ENCODE measurements at regions of chr13 and their contacts with region 1.

Region 1: GRCh38 chr13:20924758-20925394 is 22.3 kb upstream of the XPO4 start:
- DNase-seq: peak; percentile 73 to 85 (median 77)
- H3K4me3 ChIP-seq: no peak overlapping the region
- H3K27ac ChIP-seq: no peak overlapping the region
- H3K4me1 ChIP-seq: no peaks in the 10 kb centered on the region
- H3K27me3 ChIP-seq: no peaks in the 10 kb centered on the region
- CTCF ChIP-seq: peak in 2 of 3 donors; percentile 42 to 51
- EP300 ChIP-seq: no peak
- POLR2A ChIP-seq: no peak

Region 2: DNA sequence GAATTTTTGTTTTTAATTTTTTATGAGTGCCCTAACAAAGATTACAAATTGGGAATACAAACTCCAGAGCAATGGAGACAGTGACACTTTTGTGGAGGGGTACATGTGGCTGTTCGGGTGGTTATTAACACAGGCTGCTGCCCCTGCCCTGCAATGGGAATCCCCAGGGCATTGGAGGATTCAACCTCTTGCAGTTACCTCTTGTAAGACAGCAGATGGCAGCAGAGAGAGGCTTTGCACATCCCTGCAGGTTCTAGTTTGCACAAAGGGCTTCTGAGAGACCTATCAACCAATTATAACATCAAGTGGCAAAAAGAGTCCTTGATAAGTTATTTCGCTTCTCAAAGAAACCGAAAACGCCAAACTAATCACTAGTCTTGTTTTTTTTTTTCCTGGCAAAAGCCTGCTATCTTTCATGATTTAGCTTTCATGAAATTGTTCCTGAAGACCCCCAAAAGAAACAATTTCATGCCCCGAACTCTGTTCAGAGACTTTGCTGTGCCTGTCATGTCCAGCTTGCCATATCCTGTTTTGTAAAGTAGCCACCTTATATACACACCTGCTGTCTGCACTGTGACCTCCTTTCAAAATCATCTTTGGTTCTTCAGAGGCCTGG is 742.5 kb before region 1 on chr13:
- intact Hi-C with region 1: loop called in 1 of 4 experiments (anchors 10 kb)
- DNase-seq: no peak
- H3K4me3 ChIP-seq: no peak overlapping the region
- H3K27ac ChIP-seq: no peak overlapping the region
- H3K4me1 ChIP-seq: no peaks in the 10 kb centered on the region
- H3K27me3 ChIP-seq: no peaks in the 10 kb centered on the region
- CTCF ChIP-seq: peak in 2 of 3 donors; percentile 14 to 33
- EP300 ChIP-seq: no peak
- POLR2A ChIP-seq: no peak

Region 3: GRCh38 chr13:20713751-20714150 is 211.1 kb before region 1 on chr13:
- intact Hi-C with region 1: loop called in 3 of 4 experiments (anchors 5 to 10 kb)
- DNase-seq: peak in 1 of 5 donors; percentile 43
- H3K4me3 ChIP-seq: no peak overlapping the region
- H3K27ac ChIP-seq: peak overlapping the region in 1 of 2 donors; percentile 65
- H3K4me1 ChIP-seq: peaks cover 11% of the 10 kb centered on the region
- H3K27me3 ChIP-seq: no peaks in the 10 kb centered on the region
- CTCF ChIP-seq: no peak
- EP300 ChIP-seq: no peak
- POLR2A ChIP-seq: no peak

Region 4: GRCh38 chr13:20882206-20882605 is 42.7 kb before region 1 on chr13:
- intact Hi-C with region 1: no loop called
- DNase-seq: no peak
- H3K4me3 ChIP-seq: no peak overlapping the region
- H3K27ac ChIP-seq: no peak overlapping the region
- H3K4me1 ChIP-seq: peaks cover 2% of the 10 kb centered on the region
- H3K27me3 ChIP-seq: no peaks in the 10 kb centered on the region
- CTCF ChIP-seq: no peak
- EP300 ChIP-seq: no peak
- POLR2A ChIP-seq: no peak